Dorsolateral prefrontal cortex (tissue), 120 donors: ENCODE measurements at regions of chr20 and their contacts with region 1.

Region 1: GRCh38 chr20:44683263-44684046 is 31.7 kb upstream of the CCN5 start:
- DNase-seq: peak in 7 of 10 donors; percentile 8 to 68 (median 55)
- H3K4me3 ChIP-seq: no peak overlapping the region
- H3K27ac ChIP-seq: peak overlapping the region in 6 of 59 donors; percentile 11 to 85 (median 70)
- H3K27me3 ChIP-seq: no peaks in the 10 kb centered on the region
- CTCF ChIP-seq: peak in 52 of 56 donors; percentile 34 to 81 (median 66)

Region 2: GRCh38 chr20:44217342-44218092 is 465.9 kb before region 1 on chr20:
- intact Hi-C with region 1: loop called in 1 of 2 experiments (anchors 5 kb)
- DNase-seq: peak; percentile 12 to 67 (median 62)
- H3K4me3 ChIP-seq: no peak overlapping the region
- H3K27ac ChIP-seq: peak overlapping the region in 3 of 59 donors; percentile 2 to 36 (median 13)
- H3K27me3 ChIP-seq: no peaks in the 10 kb centered on the region
- CTCF ChIP-seq: peak; percentile 40 to 89 (median 74)

Region 3: GRCh38 chr20:44326391-44327159 is 356.9 kb before region 1 on chr20:
- intact Hi-C with region 1: no loop called
- DNase-seq: peak in 1 of 10 donors; percentile 9
- H3K4me3 ChIP-seq: peak overlapping the region in 55 of 59 donors; percentile 11 to 64 (median 44)
- H3K27ac ChIP-seq: no peak overlapping the region
- H3K27me3 ChIP-seq: peaks cover 0 to 31% (median 5%) of the 10 kb centered on the region in 45 donors
- CTCF ChIP-seq: no peak

Region 4: GRCh38 chr20:44388466-44389023 is 294.9 kb before region 1 on chr20:
- intact Hi-C with region 1: loop called in 1 of 2 experiments (anchors 10 kb)
- DNase-seq: peak; percentile 18 to 84 (median 62)
- H3K4me3 ChIP-seq: peak overlapping the region in 4 of 59 donors; percentile 6 to 29 (median 22)
- H3K27ac ChIP-seq: no peak overlapping the region
- H3K27me3 ChIP-seq: peaks cover 0 to 17% (median 0%) of the 10 kb centered on the region in 45 donors
- CTCF ChIP-seq: peak; percentile 43 to 78 (median 64)

Region 5: DNA sequence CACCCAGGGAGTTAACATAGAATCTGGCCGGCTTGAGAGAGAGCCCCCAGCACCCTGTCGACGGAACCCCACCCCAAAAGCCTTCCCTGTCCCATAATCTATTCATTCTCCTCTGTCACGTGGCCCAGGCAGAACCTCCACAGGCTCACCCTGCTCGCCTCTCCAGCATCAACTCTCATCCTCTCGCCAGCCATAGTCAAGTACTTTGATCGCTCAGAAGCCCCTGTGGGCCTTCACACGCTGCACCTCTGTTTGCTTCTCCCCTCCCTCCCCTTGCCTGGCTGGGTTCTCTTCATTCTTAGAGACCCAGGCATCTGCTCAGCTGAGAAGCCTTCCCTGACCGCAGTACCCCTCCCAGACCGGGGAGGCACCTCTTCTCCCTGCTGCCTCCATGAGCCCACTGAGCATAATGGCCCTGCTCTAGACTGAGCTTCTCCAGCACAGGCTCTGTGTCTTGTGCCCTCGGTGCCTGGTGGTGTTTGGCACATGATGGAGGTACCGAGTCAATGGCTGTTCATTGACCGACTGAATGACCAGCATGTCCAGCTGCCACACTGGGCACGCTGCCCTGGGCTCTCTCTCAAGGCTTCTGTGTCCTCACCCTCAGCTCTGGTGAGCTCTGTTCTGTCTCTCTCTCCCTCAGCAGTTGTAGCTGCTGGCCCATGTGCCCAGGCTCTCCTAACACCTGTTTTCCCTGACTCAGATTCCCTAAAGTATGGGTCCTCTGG is 67.4 kb before region 1 on chr20:
- intact Hi-C with region 1: loop called in 1 of 2 experiments (anchors 2 kb)
- DNase-seq: peak; percentile 42 to 99 (median 94)
- H3K4me3 ChIP-seq: peak overlapping the region in 2 of 59 donors; percentile 1 to 8
- H3K27ac ChIP-seq: peak overlapping the region; percentile 85 to 100 (median 97)
- H3K27me3 ChIP-seq: no peaks in the 10 kb centered on the region
- CTCF ChIP-seq: peak in 6 of 56 donors; percentile 7 to 18 (median 12)

Region 6: GRCh38 chr20:44733341-44734069 is 50.0 kb after region 1 on chr20:
- intact Hi-C with region 1: loop called (anchors 1 kb)
- DNase-seq: peak; percentile 38 to 86 (median 82)
- H3K4me3 ChIP-seq: no peak overlapping the region
- H3K27ac ChIP-seq: peak overlapping the region in 53 of 59 donors; percentile 6 to 87 (median 68)
- H3K27me3 ChIP-seq: no peaks in the 10 kb centered on the region
- CTCF ChIP-seq: peak; percentile 77 to 100 (median 96)

Region 7: GRCh38 chr20:44866703-44867335 is 183.4 kb after region 1 on chr20:
- intact Hi-C with region 1: loop called (anchors 1 to 5 kb)
- DNase-seq: no peak
- H3K4me3 ChIP-seq: peak overlapping the region in 13 of 59 donors; percentile 36 to 63 (median 49)
- H3K27ac ChIP-seq: no peak overlapping the region
- H3K27me3 ChIP-seq: no peaks in the 10 kb centered on the region
- CTCF ChIP-seq: no peak

Region 8: DNA sequence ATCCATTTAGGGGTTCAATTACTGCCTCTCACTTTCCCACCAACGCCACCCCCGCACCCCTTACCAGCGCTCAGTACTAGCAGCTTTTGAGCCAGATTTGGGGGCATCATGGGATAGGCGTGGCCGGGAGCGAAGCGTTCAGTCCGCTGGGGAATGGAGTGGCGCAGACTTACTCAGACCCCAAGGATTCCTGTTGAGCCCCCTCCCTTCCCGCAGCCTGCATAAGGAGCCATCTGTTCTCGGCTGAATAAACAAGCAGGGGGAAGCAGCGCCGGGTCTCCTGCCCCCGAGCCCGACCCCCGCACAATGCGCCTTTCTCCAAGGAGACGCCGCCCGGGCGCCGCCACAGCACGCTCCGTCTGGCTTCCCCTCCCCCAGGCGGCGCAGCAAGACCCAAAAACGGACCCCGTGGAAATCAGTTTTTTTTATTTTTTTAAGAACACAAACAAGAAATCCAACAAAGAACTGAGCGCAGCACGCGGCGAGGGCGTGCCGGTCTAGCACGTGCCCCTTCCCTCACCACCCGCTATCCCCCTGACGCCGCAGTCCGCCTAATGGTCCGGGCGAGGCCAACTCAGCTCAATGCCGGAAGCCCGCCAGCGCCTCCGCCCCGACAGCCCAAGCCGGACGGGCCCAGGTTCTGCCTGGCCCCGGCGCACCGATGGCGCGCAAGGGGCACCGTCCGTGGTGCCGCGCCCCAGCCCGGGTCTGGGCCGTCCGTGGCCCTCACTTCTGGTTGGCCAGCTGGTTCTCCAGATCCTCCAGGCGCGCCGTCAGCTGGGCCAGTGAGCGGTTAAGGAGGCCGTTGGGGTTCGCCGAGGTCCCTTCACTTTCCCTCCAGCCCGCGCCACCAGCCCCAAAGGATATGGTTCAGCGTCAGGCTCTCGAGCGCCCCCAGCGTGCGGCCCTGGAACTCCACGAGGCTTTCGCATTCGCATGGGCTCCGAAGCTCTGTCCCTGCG is 609.9 kb after region 1 on chr20:
- intact Hi-C with region 1: no loop called
- DNase-seq: peak; percentile 43 to 87 (median 79)
- H3K4me3 ChIP-seq: peak overlapping the region; percentile 49 to 79 (median 65)
- H3K27ac ChIP-seq: peak overlapping the region in 44 of 59 donors; percentile 3 to 82 (median 52)
- H3K27me3 ChIP-seq: peaks cover 0 to 4% (median 0%) of the 10 kb centered on the region in 45 donors
- CTCF ChIP-seq: peak; percentile 65 to 95 (median 90)